Dorsolateral prefrontal cortex (tissue), 120 donors: ENCODE measurements at regions of chr17 and their contacts with region 1.

Region 1: DNA sequence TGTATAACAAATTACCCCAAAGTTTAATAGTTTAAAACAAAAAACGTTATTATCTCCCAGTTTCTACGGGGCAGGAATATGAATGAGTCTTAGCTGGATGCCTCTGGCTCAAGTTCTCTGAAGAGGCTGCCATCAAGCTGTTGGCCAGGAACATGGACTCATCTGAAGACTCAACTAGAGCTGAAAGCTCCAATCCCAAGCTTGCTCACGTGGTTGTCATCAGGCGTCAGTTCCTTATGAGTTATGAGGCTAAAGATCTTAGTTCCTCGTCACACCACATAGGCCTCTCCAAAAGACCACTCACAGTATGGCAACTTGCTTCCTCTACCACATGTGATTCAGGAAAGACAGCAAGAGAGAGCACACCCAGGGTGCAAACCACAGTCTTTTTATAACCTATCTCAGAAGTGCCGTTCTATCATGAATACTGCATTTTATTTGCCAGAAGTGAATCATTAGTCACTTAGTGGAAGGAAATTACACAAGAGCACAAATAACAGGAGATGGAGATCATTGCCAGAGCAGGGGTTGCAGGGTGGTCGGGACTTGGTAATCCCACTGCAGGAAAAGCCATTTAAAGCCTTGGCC is 48.7 kb upstream of the NLK start:
- DNase-seq: peak in 1 of 10 donors; percentile 43
- H3K4me3 ChIP-seq: peak overlapping the region in 11 of 59 donors; percentile 2 to 32 (median 10)
- H3K27ac ChIP-seq: peak overlapping the region; percentile 4 to 98 (median 94)
- H3K27me3 ChIP-seq: no peaks in the 10 kb centered on the region
- CTCF ChIP-seq: peak in 4 of 56 donors; percentile 4 to 8 (median 5)

Region 2: DNA sequence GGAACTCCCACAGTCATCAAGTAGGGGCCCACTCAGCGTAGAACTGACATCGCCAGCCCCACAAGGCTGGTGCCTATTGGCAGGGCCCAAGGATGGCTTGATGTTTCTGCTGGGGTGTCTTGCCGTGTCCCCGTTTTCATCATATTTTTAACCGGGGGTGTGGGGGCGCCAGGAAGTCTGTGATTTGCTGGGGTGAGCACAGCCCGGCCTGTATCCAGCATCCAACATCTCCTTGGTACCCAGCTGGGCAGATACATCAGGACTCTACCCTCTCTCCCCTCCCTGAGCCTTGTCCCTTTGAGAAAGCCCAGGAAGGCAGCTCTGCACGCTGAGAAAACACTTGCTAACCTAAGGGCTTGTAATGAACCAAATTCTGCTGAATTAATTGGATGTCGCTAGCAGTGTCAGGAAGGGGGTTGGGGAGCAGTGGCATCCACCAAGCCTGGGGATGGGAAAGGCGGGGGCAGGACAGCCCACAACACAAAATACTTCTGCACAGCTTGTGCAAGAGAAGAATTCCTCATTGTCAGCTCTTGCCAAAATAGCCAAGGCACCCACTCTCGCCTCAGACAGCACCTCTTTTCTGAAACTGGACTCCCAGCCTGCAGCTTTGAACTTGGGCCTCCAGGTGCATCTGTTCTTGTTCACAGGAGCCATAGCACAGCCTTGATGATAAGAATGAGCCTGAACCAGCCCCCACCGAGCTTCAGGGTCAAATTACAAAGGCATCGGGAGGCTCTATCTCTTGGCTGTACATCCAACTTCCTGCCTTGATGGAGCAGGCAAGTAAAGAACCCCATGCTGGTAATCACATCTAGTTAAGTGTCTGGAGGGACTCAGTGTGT is 37.0 kb before region 1 on chr17:
- intact Hi-C with region 1: no loop called
- DNase-seq: peak in 4 of 10 donors; percentile 39 to 55 (median 50)
- H3K4me3 ChIP-seq: no peak overlapping the region
- H3K27ac ChIP-seq: peak overlapping the region in 50 of 59 donors; percentile 1 to 83 (median 56)
- H3K27me3 ChIP-seq: no peaks in the 10 kb centered on the region
- CTCF ChIP-seq: no peak

Region 3: DNA sequence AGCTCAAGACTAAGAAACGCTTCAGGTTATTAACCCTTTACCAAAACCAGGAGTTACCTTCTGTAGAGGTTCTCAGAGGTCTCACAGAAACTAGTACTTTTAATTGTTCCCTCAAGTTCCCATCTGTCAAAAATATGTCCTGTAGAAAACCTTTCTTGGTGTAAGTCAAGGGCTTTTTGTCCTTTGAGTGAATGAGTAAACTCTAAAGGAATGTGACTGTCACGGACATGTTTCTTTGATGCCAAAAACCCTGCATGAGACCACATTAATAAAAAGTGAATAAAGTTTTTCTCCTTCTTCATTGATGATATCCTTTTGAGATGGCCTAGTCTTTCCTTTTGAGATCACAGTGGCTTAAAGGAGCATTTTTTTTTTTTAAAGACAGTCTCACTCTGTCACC is 151.5 kb after region 1 on chr17:
- intact Hi-C with region 1: loop called in 1 of 2 experiments (anchors 2 kb)
- DNase-seq: no peak
- H3K4me3 ChIP-seq: no peak overlapping the region
- H3K27ac ChIP-seq: peak overlapping the region in 44 of 59 donors; percentile 1 to 95 (median 76)
- H3K27me3 ChIP-seq: no peaks in the 10 kb centered on the region
- CTCF ChIP-seq: no peak